ENCODE measurements at regions of chr2 and their contacts with region 1.

Region 1: GRCh38 chr2:63661076-63661475 is 72.3 kb downstream of the MDH1 start:
- DNase-seq: no peak
- ATAC-seq: no peak
- H3K4me3 ChIP-seq: no peak overlapping the region
- H3K27ac ChIP-seq: no peak overlapping the region
- H3K4me1 ChIP-seq: no peaks in the 10 kb centered on the region
- H3K27me3 ChIP-seq: no peaks in the 10 kb centered on the region
- CTCF ChIP-seq: no peak

Region 2: GRCh38 chr2:63676135-63676534 is 15.1 kb after region 1 on chr2:
- intact Hi-C with region 1: no loop called
- DNase-seq: no peak
- ATAC-seq: no peak
- H3K4me3 ChIP-seq: no peak overlapping the region
- H3K27ac ChIP-seq: no peak overlapping the region
- H3K4me1 ChIP-seq: peaks cover 5% of the 10 kb centered on the region
- H3K27me3 ChIP-seq: no peaks in the 10 kb centered on the region
- CTCF ChIP-seq: no peak

Region 3: DNA sequence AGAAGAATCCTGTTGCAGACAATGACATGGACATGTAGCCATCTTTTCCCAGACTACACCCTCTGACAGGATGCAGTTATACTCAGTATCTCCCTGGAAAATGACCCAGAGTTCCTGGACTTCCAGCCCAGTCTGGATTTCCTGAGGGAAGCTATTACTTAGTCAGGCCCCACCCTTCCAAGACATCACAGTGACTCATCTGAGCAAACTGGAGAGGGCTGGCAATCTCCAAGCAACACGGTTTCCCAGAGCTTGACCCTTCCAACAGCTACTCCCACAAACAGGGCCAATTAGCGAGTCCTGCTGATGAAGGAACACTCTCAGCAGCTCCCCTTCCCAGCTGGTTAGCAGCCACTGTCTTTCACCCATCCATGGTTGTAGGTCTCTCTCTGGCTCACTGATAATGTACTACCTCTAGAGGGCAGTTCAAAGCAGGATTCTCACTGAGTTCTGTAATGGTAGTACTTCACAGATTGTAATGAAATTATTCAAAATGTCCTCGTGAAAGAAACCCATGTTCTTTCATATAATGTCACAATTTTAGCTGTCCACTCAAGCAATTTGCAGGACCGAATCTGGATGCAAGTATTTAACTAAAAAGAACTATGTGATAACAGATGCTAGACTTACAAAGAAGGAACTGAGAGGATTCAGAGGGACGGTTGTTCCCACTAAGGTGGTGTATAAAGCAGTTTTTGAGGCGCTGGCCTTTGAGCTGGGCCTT is 37.9 kb after region 1 on chr2:
- intact Hi-C with region 1: no loop called
- DNase-seq: peak; percentile 52 to 66
- ATAC-seq: peak; percentile 89 to 93 (median 92)
- H3K4me3 ChIP-seq: no peak overlapping the region
- H3K27ac ChIP-seq: peak overlapping the region; percentile 38
- H3K4me1 ChIP-seq: no peaks in the 10 kb centered on the region
- H3K27me3 ChIP-seq: no peaks in the 10 kb centered on the region
- CTCF ChIP-seq: peak; percentile 54

Region 4: DNA sequence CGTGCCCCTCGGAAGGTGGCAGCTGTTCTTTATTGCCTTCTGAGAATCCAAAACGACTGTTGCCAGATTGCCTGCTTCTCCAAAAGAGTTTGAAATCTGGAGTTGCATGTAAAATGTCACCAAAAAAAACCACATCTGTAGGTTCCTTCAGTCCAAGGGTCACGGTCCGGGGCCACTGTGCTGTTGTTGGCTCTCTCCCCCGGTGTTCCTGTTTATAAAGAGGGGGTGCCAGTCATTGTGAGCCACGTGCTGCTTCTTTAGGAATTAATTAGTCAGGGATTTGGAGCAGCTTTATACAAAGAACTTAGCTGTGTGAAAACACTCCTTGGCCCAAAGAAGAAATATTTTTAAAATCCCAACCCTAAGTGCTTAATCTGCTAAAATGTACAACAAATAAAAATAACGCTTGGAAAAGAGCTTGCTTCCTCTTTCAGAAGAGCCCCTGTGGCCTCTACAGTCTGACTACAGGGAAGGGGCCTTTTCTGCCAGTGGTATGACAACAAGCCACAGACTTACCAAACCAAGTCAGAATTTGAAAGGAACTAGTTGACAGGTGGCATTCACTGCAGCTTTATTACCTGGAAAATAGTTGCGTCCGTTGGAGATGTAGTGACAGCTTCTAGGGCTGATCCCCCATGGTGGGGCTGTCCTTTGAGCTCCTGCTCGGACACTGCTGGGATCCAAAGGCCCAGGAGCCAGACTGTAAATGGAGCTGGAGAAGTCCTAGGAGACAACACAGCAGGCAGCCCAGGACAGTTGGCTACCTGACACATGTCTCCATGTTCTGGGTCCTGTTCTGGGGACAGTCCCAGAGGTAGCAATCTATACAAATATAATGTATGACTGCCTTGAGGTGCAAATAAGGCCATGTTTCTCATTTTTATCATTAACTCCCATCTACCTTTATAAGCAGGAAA is 1243.6 kb after region 1 on chr2:
- intact Hi-C with region 1: loop called in 1 of 2 experiments (anchors 10 kb)
- DNase-seq: no peak
- ATAC-seq: no peak
- H3K4me3 ChIP-seq: no peak overlapping the region
- H3K27ac ChIP-seq: no peak overlapping the region
- H3K4me1 ChIP-seq: peaks cover 11% of the 10 kb centered on the region
- H3K27me3 ChIP-seq: no peaks in the 10 kb centered on the region
- CTCF ChIP-seq: no peak

Measured in psoas muscle (tissue), 8 donors.